ENCODE measurements at regions of chr20 and their contacts with region 1.

Region 1: GRCh38 chr20:58388882-58389323 is at the start of gene VAPB:
- DNase-seq: peak; percentile 95 to 97 (median 97)
- H3K4me3 ChIP-seq: peak within 1 kb of the TSS; percentile 86
- H3K4me3 Mint-ChIP-seq: peak within 1 kb of the TSS; percentile 89 to 98 (median 95)
- H3K27ac ChIP-seq: peak within 1 kb of the TSS; percentile 96
- H3K27ac Mint-ChIP-seq: peak within 1 kb of the TSS; percentile 97 to 100 (median 99)
- H3K4me1 ChIP-seq: peaks cover 46% of the 10 kb centered on the region
- H3K4me1 Mint-ChIP-seq: peaks cover 42 to 54% (median 52%) of the 10 kb centered on the region in 3 donors
- H3K27me3 ChIP-seq: no peaks in the 10 kb centered on the region
- H3K27me3 Mint-ChIP-seq: peaks cover 4 to 12% of the 10 kb centered on the region in 2 donors
- total RNA-seq, gene VAPB: 36.6 to 40.3 TPM

Region 2: GRCh38 chr20:58309575-58310290 is 79.2 kb before region 1 on chr20 and contains the start of gene RAB22A:
- CTCF ChIA-PET with region 1: interaction called, 6 read pairs
- POLR2A ChIA-PET with region 1: interaction called, 13 read pairs
- DNase-seq: peak; percentile 80 to 87 (median 83)
- H3K4me3 ChIP-seq: peak within 1 kb of the TSS; percentile 63
- H3K4me3 Mint-ChIP-seq: peak within 1 kb of the TSS; percentile 90 to 98 (median 94)
- H3K27ac ChIP-seq: peak within 1 kb of the TSS; percentile 84
- H3K27ac Mint-ChIP-seq: peak within 1 kb of the TSS; percentile 93 to 99 (median 98)
- H3K4me1 ChIP-seq: peaks cover 65% of the 10 kb centered on the region
- H3K4me1 Mint-ChIP-seq: peaks cover 49 to 82% (median 65%) of the 10 kb centered on the region in 3 donors
- H3K27me3 ChIP-seq: no peaks in the 10 kb centered on the region
- H3K27me3 Mint-ChIP-seq: peaks cover 0 to 5% of the 10 kb centered on the region in 2 donors
- total RNA-seq, gene RAB22A: 17.3 to 17.6 TPM